OCI-LY7 (cell line): ENCODE measurements at regions of chr9 and their contacts with region 1.

Region 1: DNA sequence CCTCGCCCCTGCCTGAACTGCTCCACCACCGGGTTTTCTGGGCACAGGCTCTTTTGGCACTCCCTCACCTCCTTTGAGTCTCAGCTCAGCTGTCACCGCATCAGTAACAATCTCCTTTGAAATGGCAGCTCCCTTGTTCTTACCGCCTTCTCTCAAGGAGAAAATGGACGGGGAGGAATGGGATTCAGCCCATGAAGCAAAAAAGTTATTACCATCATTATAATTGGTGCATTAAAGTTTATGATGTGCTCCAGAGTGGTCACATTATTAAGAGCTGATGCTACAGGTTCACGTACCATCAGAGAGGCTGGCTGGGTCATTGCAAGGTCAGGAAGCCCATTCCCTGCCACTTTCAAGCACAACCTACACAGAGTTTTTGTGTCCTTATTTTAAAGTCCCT is 344.7 kb downstream of the AGTPBP1 start:
- DNase-seq: no peak
- H3K4me3 ChIP-seq: no peak overlapping the region
- H3K27ac ChIP-seq: no peak overlapping the region
- H3K4me1 ChIP-seq: no peaks in the 10 kb centered on the region
- CTCF ChIP-seq: no peak

Region 2: DNA sequence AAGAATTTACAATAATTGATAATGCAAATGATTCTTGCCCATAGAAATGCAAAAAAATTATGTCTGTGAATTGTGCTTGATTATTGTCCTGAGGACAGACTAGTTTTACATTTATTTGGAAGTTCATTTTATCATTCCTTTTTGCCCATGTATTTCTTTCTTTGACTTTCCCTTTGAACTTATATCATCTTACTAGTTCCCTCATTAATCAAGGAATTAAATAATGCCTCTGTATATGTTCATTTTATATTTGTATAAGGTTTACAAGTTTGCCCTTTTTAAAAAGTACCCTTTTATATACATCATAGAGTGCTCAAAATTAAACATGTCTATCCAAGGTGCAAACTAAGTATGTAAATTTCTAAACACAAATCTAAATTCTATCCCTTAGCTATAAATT is 225.8 kb before region 1 on chr9:
- CTCF ChIA-PET with region 1: interaction called, 13 read pairs
- POLR2A ChIA-PET with region 1: no interaction called
- intact Hi-C with region 1: no loop called
- DNase-seq: no peak
- H3K4me3 ChIP-seq: no peak overlapping the region
- H3K27ac ChIP-seq: no peak overlapping the region
- H3K4me1 ChIP-seq: no peaks in the 10 kb centered on the region
- CTCF ChIP-seq: no peak

Region 3: GRCh38 chr9:86062845-86063693 is 666.1 kb after region 1 on chr9:
- CTCF ChIA-PET with region 1: no interaction called
- POLR2A ChIA-PET with region 1: no interaction called
- intact Hi-C with region 1: no loop called
- DNase-seq: no peak
- H3K4me3 ChIP-seq: no peak overlapping the region
- H3K27ac ChIP-seq: no peak overlapping the region
- H3K4me1 ChIP-seq: no peaks in the 10 kb centered on the region
- CTCF ChIP-seq: no peak